A549 (cell line): ENCODE measurements at regions of chr10 and their contacts with region 1.

Region 1: GRCh38 chr10:71766702-71767419 is 6.5 kb downstream of the VSIR start:
- DNase-seq: peak; percentile 85 to 98
- ATAC-seq: peak; percentile 81 to 88
- H3K4me3 ChIP-seq: no peak overlapping the region
- H3K27ac ChIP-seq: peak overlapping the region; percentile 98 to 99
- H3K4me1 ChIP-seq: peaks cover 89% of the 10 kb centered on the region
- CTCF ChIP-seq: no peak
- EP300 ChIP-seq: peak; percentile 75 to 87; a peak in 3 of 5 replicates
- POLR2A ChIP-seq: no peak
- RAD21 ChIP-seq: peak; percentile 0 to 16; a peak in 2 of 5 replicates

Region 2: GRCh38 chr10:71727738-71728737 is 38.8 kb before region 1 on chr10:
- CTCF ChIA-PET with region 1: interaction called, 16 read pairs
- POLR2A ChIA-PET with region 1: interaction called, 10 read pairs
- DNase-seq: peak; percentile 19 to 42
- ATAC-seq: peak in 1 of 2 experiments; percentile 18; a peak in 2 of 6 replicates
- H3K4me3 ChIP-seq: no peak overlapping the region
- H3K27ac ChIP-seq: peak overlapping the region; percentile 38 to 79; a peak in 4 of 6 replicates
- H3K4me1 ChIP-seq: peaks cover 33% of the 10 kb centered on the region
- CTCF ChIP-seq: no peak
- EP300 ChIP-seq: no peak
- POLR2A ChIP-seq: no peak
- RAD21 ChIP-seq: no peak

Region 3: DNA sequence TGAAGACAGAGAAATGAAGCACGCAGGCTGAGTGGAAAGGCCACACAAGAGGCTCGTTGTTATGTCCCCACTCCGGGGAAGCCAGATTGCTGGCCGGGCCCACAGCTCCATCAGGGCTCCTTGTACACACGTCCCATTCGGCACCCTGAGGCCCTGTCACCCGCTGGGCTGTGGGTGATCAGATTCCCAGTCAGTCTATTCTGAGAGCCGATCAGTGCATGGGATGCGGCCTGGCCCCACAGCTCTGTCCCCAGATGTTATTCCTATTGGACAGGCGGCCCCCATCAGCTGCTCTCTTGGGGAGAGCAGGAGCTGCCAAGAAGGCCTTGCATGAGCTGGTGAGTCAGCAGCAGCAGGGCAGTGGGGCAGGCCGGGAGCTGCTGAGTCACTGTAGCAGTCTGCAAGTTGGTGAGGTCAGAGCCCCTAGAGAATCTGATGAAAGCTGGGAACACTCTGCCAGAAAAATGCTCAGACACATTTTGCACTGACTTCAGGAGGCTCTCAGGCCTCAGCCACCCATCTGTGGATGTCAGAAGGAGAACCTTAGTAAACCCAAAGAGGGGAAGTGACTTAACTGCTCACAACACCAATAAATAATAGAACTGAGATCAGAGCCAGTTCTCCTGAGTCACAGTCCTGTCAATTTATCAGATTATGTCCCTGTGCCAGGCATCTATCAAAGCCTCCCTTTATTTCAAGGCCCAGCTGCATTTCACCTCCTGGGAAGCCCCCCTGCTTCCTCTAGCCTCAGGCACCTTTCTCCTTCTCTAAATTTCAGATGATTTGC is 93.6 kb after region 1 on chr10:
- CTCF ChIA-PET with region 1: no interaction called
- POLR2A ChIA-PET with region 1: interaction called, 10 read pairs
- DNase-seq: peak; percentile 95 to 99
- ATAC-seq: peak; percentile 97 to 98
- H3K4me3 ChIP-seq: no peak overlapping the region
- H3K27ac ChIP-seq: peak overlapping the region; percentile 91 to 93
- H3K4me1 ChIP-seq: peaks cover 66% of the 10 kb centered on the region
- CTCF ChIP-seq: no peak
- EP300 ChIP-seq: peak; percentile 91 to 95; a peak in 4 of 5 replicates
- POLR2A ChIP-seq: no peak; the same call in 1 of the 2 replicates
- RAD21 ChIP-seq: peak; percentile 10 to 50; a peak in 4 of 5 replicates